Naive thymus-derived CD8-positive, alpha-beta T cell (primary cell): ENCODE measurements at regions of chr5 and their contacts with region 1.

Region 1: GRCh38 chr5:72847989-72848473 is 31.6 kb downstream of the TNPO1 start:
- DNase-seq: peak; percentile 67 to 90 (median 77)
- ATAC-seq: peak; percentile 85 to 87
- H3K4me3 Mint-ChIP-seq: peak overlapping the region; percentile 93 to 99 (median 97)
- H3K27ac Mint-ChIP-seq: peak overlapping the region; percentile 95 to 98 (median 96)
- H3K4me1 Mint-ChIP-seq: peaks cover 18 to 64% (median 50%) of the 10 kb centered on the region in 4 donors
- H3K27me3 Mint-ChIP-seq: no peaks in the 10 kb centered on the region

Region 2: GRCh38 chr5:72816311-72817145 is 31.5 kb before region 1 on chr5 and contains the start of gene TNPO1:
- POLR2A ChIA-PET with region 1: interaction called, 35 read pairs
- DNase-seq: peak; percentile 73 to 90 (median 84)
- ATAC-seq: peak; percentile 73 to 76
- H3K4me3 Mint-ChIP-seq: peak within 1 kb of the TSS; percentile 84 to 97 (median 96)
- H3K27ac Mint-ChIP-seq: peak within 1 kb of the TSS; percentile 91 to 99 (median 96)
- H3K4me1 Mint-ChIP-seq: peaks cover 8 to 29% (median 20%) of the 10 kb centered on the region in 4 donors
- H3K27me3 Mint-ChIP-seq: peaks cover 10 to 15% (median 11%) of the 10 kb centered on the region in 5 donors
- polyA plus RNA-seq, gene TNPO1: 47.6 to 63.7 (median 52.8) TPM